ENCODE measurements at regions of chr7 and their contacts with region 1.

Region 1: DNA sequence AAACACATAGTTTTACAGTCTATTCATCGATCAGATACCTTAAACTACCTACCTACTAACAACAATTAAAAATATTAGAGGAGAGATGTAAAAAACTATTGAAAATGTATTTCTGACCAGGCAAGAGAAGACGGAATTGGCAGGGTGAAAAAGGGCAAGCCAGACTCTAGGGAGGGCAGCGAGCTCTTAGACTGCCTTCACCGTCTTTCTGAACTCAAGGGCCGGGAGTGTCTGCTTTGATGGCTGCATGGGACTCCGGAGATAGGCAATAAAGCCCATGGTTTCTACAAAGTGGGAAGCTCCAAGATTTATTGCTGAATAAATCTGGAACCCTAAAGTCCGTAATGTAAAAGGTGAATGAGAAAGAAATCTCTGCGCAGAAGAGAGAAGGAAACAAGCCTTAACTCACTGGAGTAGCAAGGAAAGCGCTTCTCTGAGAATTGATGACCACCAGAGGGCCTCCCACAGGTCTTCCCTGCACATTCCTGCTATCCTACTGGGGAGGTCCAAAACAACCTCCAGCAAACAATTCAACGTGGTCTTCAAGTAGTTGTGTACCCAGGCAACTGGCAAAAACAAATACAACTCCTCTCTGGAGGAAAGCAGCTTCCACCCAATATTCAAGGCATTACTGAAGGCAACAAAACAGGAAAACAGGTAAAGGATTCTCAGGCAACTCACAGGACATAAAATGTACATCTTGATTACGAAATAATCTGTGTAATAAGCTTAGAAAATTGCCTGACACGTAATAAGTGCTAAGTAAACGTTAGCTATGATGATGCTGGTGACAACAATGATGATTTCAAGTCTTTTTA is 181.3 kb downstream of the SDK1 start:
- DNase-seq: peak in 1 of 2 experiments; percentile 5
- H3K4me3 ChIP-seq: no peak overlapping the region
- H3K27ac ChIP-seq: no peak overlapping the region
- H3K4me1 ChIP-seq: no peaks in the 10 kb centered on the region
- H3K27me3 ChIP-seq: peaks cover 31% of the 10 kb centered on the region; the same call in 1 of the 2 replicates
- CTCF ChIP-seq: peak; percentile 67

Region 2: DNA sequence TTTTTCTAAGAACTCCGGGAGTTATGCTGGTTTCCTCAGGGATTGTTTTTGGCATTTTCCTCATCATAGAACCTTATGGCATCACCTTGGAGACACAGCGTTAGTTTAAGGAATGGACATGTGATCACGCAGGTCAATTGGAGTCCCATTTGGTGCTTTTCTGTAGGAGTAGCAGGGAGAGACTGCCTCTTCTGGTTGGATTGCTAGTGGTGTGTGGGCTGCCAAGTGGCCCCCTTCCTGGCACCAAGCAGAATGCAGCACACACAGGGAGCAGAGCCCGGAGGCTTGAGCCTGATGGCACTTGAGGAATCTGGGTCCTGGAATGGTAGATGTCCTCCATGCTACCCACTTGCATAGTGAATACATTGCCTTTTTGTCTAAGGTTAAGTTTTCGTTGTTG is 123.4 kb before region 1 on chr7:
- CTCF ChIA-PET with region 1: no interaction called
- POLR2A ChIA-PET with region 1: no interaction called
- intact Hi-C with region 1: loop called (anchors 10 kb)
- DNase-seq: no peak
- H3K4me3 ChIP-seq: no peak overlapping the region
- H3K27ac ChIP-seq: no peak overlapping the region
- H3K4me1 ChIP-seq: no peaks in the 10 kb centered on the region
- H3K27me3 ChIP-seq: peaks cover 81% of the 10 kb centered on the region
- CTCF ChIP-seq: no peak

Region 3: DNA sequence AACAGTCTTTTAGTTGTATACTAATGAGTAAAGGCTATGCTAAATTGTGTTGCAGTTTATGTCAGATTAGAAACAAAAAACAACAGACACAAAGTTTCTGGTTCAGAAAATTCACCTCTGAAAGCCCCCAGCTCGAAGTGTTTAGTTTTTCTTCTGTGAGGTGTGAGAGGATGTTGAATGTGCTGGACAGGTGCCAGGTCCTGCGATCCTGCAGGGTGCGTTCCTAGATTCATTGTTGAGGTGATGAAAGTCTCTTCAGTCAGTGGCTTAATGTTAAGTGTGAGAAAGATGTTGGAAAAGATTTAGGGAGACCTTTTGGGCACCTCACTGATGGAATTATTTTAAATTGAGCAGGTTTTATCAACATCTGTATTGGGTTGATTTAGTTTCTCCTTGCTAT is 106.0 kb after region 1 on chr7:
- CTCF ChIA-PET with region 1: no interaction called
- POLR2A ChIA-PET with region 1: no interaction called
- intact Hi-C with region 1: no loop called
- DNase-seq: no peak
- H3K4me3 ChIP-seq: no peak overlapping the region
- H3K27ac ChIP-seq: no peak overlapping the region
- H3K4me1 ChIP-seq: no peaks in the 10 kb centered on the region
- H3K27me3 ChIP-seq: peaks cover 53% of the 10 kb centered on the region
- CTCF ChIP-seq: no peak